ENCODE measurements at regions of chr3 and their contacts with region 1.

Region 1: GRCh38 chr3:61008998-61009380 is 242.3 kb downstream of the FHIT start:
- DNase-seq: no peak
- H3K4me3 Mint-ChIP-seq: no peak overlapping the region
- H3K27ac Mint-ChIP-seq: no peak overlapping the region
- H3K4me1 Mint-ChIP-seq: peaks cover 8% of the 10 kb centered on the region
- H3K27me3 Mint-ChIP-seq: no peaks in the 10 kb centered on the region

Region 2: DNA sequence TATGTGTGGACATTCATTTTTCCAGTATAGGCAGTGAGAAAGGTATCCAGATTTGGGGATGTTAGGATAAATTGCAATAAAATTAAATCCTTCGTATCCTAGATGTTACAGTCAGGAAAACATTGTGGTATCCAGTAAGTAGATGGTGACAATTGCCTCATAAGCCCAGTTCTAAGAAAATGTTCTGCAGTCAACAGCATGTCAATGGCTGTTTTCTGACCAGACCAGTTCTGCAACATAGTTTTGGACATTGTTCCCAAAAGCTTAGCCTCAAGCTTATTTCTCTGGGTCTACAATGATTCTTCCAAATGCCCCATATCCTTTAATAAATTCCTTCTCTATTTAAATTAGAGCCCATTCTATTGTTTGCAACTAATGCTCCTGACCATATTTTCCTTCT is 238.5 kb before region 1 on chr3:
- CTCF ChIA-PET with region 1: no interaction called
- intact Hi-C with region 1: no loop called
- DNase-seq: no peak
- H3K4me3 Mint-ChIP-seq: no peak overlapping the region
- H3K27ac Mint-ChIP-seq: no peak overlapping the region
- H3K4me1 Mint-ChIP-seq: no peaks in the 10 kb centered on the region
- H3K27me3 Mint-ChIP-seq: no peaks in the 10 kb centered on the region

Region 3: GRCh38 chr3:60954048-60954447 is 54.9 kb before region 1 on chr3:
- CTCF ChIA-PET with region 1: no interaction called
- intact Hi-C with region 1: no loop called
- DNase-seq: no peak
- H3K4me3 Mint-ChIP-seq: no peak overlapping the region
- H3K27ac Mint-ChIP-seq: no peak overlapping the region
- H3K4me1 Mint-ChIP-seq: no peaks in the 10 kb centered on the region
- H3K27me3 Mint-ChIP-seq: no peaks in the 10 kb centered on the region

Region 4: DNA sequence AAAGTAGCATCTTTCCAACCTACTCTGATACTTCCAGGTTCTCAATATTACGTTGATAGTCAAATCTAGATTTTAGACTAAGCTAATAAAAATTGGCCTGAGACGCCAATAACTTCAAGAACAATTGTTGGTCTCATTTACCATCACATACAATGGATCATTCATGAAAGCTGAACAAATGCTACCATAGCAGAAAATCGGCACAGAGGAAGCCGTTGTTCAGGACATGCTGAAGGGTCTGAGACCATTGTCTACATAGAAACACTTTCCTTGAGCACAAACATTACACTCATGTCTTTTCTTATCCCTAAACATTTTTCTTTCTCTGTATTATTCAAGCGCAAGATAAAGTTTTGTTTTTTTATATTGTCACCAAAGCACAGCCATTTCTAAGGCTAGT is 279.5 kb after region 1 on chr3:
- CTCF ChIA-PET with region 1: no interaction called
- intact Hi-C with region 1: loop called (anchors 10 kb)
- DNase-seq: no peak
- H3K4me3 Mint-ChIP-seq: no peak overlapping the region
- H3K27ac Mint-ChIP-seq: no peak overlapping the region
- H3K4me1 Mint-ChIP-seq: no peaks in the 10 kb centered on the region
- H3K27me3 Mint-ChIP-seq: peaks cover 3% of the 10 kb centered on the region